ENCODE measurements at regions of chr9 and their contacts with region 1.

Region 1: GRCh38 chr9:114108016-114108833 is 9.1 kb upstream of the KIF12 start:
- DNase-seq: peak; percentile 57
- H3K4me3 ChIP-seq: no peak overlapping the region
- H3K27ac ChIP-seq: no peak overlapping the region
- H3K27me3 ChIP-seq: peaks cover 19% of the 10 kb centered on the region
- CTCF ChIP-seq: peak; percentile 100

Region 2: DNA sequence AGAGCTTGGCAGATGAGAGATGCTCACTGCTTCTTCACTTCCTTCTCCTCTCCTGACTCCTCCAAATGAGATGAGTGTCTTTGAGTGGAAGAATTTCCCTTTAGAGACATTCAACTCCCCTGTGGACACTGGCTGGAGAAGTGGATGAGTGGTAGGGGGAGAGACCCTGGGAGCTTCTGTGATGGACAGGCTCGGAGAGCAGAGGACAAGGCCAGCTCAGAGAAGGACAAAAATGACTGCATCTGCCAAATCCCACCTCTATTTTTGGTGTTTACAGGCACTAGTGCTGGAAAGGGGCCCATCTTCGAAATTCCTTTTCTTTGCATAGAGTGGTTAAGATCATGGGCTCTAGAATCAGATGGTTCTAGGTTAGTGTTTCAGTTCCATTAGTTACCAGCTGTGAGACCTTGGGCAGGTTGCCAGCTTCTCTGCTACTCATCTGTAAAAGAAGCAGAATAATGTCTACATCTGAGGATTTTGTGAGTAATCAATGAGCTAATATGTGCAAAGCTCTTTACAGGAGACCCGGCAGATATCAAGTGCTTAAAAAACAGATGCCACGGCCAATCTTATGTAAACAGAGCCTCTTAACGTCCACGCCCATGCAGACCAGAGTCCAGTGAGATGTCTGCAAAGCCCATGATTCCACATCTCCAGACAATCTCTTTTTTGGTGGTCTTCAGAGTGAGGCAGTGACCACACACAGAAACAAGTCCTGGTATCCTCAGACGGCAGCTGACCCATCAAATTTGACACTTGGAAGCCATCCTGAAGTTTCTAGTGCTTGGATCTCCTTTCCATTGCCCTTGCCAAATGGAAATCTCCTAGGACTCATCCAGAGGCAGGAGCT is 33.6 kb after region 1 on chr9:
- CTCF ChIA-PET with region 1: interaction called, 26 read pairs
- POLR2A ChIA-PET with region 1: interaction called, 3 read pairs
- DNase-seq: no peak
- H3K4me3 ChIP-seq: no peak overlapping the region
- H3K27ac ChIP-seq: peak overlapping the region; percentile 11
- H3K27me3 ChIP-seq: peaks cover 73% of the 10 kb centered on the region
- CTCF ChIP-seq: no peak

Region 3: GRCh38 chr9:114196979-114197622 is 88.9 kb after region 1 on chr9:
- CTCF ChIA-PET with region 1: interaction called, 13 read pairs
- POLR2A ChIA-PET with region 1: interaction called, 3 read pairs
- DNase-seq: no peak
- H3K4me3 ChIP-seq: no peak overlapping the region
- H3K27ac ChIP-seq: no peak overlapping the region
- H3K27me3 ChIP-seq: no peaks in the 10 kb centered on the region
- CTCF ChIP-seq: no peak

Region 4: DNA sequence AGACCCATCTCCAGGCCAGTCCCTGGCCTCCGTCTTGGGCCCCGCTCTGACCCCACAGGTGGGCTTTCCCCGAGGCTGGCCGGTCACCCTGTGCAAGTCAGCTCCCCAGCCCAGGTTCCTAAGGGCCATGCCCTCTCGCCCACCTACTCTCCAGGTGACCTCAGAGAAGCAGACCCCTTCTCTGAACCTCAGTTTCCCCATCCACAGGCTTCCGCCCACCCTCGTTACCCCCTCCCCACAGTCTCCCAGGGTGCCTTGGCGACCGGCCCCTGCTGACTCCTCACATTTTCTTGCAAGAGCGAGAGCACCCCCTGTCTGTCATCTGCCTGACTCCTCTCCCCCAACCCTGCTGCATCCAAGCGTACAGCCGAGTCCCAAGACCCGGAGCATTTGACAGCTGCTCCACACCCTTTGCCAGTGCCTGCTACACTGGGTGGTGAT is 163.4 kb after region 1 on chr9:
- CTCF ChIA-PET with region 1: interaction called, 22 read pairs
- POLR2A ChIA-PET with region 1: no interaction called
- DNase-seq: no peak
- H3K4me3 ChIP-seq: no peak overlapping the region
- H3K27ac ChIP-seq: no peak overlapping the region
- H3K27me3 ChIP-seq: no peaks in the 10 kb centered on the region
- CTCF ChIP-seq: peak; percentile 54